ENCODE measurements at regions of chr5 and their contacts with region 1.

Region 1: DNA sequence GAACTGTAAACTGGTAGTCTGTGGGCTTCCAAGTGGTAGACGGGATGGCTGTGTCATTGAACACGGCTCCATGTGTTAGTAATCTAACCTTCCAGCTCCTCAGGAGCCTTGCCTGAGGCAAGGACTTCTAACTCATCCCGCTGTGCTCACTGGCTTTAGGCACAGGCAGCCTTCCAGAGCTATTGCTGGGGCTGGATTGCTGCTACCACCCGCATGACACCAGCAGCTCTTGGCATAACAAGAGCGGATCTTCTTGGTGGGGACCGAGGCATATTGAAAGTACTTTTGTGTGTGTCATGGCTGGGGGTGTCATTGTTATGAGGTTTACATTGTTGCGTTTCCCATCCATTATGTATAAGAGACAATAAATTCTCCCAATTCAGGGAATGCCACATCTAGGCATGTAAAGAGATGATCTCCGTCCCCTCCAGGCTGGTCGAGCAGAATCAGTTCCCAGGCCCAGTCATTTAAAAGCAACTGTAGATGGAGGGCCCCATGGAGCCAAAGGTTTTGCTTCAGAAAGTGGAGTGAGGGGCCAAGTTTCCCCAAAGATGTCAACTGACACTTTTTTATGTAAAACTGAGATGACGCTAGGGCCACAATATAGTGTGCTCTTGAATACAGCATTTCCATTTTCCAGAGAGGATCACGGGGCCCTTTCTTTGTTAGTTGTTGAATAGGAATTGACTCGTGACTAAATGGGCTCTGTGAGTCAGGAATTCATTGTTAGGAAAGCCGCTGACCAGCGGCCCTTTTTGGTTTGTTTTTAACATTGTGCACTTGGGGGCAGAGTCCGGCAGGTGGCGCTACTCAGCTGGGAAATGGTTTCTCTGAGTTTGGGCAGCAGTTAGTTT is 759.6 kb downstream of the TAF11L14 start:
- DNase-seq: peak; percentile 54 to 70
- H3K4me3 ChIP-seq: no peak overlapping the region
- H3K4me3 Mint-ChIP-seq: no peak overlapping the region
- H3K27ac Mint-ChIP-seq: no peak overlapping the region
- H3K4me1 ChIP-seq: no peaks in the 10 kb centered on the region
- H3K4me1 Mint-ChIP-seq: no peaks in the 10 kb centered on the region
- H3K27me3 ChIP-seq: no peaks in the 10 kb centered on the region
- H3K27me3 Mint-ChIP-seq: no peaks in the 10 kb centered on the region
- CTCF ChIP-seq: peak; percentile 79 to 89

Region 2: DNA sequence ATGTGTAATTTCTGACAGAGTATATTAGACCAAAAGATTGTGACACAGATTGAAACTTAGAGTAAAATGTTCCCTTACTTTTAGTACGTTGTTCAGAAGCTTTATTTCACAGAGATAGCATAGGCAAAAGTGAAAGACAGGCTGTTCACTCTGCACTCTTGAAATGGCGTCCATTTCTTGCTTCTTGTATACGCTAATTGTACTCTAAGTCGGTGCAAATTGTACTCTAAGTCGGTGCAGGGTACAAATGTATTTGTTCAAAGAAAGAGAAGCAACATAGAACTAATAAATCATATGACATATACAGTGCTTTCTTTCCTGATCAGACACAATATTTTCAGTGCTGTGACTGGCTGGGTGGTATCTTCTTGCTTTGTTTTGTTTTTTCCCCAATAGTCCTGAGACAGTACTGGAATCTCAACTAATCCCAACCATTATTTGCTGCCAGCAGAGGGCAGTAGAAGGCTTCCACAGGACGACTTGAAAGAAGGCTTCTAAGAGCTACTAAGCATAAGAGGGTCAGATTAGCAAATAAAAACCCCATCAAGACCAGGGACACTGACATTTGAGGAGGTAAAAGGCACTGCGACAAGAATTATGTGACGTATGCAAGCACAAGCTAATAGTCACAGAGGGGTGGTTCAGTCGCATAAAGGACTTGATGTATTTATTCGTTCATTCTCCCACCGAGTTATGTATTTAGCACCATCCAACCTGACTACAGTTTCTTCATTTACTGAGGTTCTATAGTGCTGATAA is 72.2 kb after region 1 on chr5:
- CTCF ChIA-PET with region 1: interaction called, 3 read pairs
- POLR2A ChIA-PET with region 1: no interaction called
- intact Hi-C with region 1: loop called (anchors 2 kb)
- DNase-seq: peak; percentile 62 to 70
- H3K4me3 ChIP-seq: no peak overlapping the region
- H3K4me3 Mint-ChIP-seq: no peak overlapping the region
- H3K27ac Mint-ChIP-seq: no peak overlapping the region
- H3K4me1 ChIP-seq: no peaks in the 10 kb centered on the region
- H3K4me1 Mint-ChIP-seq: no peaks in the 10 kb centered on the region
- H3K27me3 ChIP-seq: no peaks in the 10 kb centered on the region
- H3K27me3 Mint-ChIP-seq: no peaks in the 10 kb centered on the region
- CTCF ChIP-seq: peak; percentile 70 to 75